MCF 10A (cell line): ENCODE measurements at regions of chr9 and their contacts with region 1.

Region 1: DNA sequence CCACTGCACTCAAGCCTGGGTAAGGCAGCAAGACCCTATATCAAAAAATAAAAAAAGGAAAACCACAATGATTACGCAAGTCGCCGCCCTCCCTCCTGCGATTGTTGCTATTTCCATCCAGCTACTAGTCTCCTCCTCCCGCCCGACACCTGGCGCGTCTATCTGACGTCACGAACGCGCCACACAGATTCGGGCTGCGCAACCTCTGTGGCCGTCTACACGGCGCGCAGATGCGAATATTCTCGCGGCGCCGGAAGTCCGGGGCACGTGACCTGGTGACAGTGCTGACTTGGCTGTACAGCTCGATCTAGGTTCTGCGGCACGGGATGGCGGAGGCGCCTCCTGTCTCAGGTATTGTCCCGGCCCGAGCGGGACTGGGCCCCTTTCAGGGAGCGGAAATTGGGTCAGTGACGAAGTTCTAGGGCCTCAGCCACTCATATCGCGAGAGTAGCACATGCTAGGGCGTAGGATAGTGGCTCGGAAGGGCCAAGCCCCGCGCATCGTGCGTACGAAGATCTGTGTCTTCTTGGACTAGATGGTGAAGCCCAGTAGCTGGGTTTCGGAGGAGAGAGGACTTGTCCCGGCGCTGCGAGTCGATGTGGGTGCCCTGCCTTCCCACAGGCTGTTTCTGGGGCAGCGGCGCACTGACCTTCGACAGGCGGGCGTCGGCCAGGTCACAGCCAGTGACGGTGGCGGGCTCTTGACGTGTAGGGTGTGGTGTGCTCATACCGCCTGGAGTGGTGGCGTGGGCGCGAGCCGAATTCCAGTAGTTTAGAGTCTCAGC is at the start of gene NFX1:
- DNase-seq: peak; percentile 98
- H3K4me3 Mint-ChIP-seq: peak within 1 kb of the TSS; percentile 100
- H3K27ac Mint-ChIP-seq: peak within 1 kb of the TSS; percentile 100
- H3K4me1 Mint-ChIP-seq: peaks cover 26% of the 10 kb centered on the region
- H3K27me3 Mint-ChIP-seq: no peaks in the 10 kb centered on the region
- CTCF ChIP-seq: no peak
- total RNA-seq, gene NFX1: 66.7 and 78.5 TPM in 2 replicates

Region 2: DNA sequence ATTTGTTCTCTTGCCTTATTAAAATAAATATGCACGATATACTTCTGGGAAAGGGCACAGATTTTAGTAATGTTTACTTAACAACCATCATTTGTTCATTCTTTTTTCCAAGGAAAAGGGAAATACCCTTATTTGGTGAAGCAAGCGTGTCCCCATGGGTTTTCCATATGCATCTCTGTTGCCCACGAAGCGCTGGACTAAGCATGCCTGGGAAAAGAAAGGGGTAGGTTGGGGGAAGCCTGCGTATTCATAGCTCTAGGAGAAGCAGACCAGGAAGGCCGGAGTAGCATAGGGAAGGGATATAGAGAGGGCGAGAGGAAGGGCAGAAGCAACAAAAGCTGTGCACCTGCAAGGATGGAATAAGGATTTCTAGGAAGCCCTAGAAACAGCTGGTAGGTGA is 967.8 kb before region 1 on chr9:
- CTCF ChIA-PET with region 1: no interaction called
- POLR2A ChIA-PET with region 1: no interaction called
- intact Hi-C with region 1: no loop called
- DNase-seq: no peak
- H3K4me3 Mint-ChIP-seq: no peak overlapping the region
- H3K27ac Mint-ChIP-seq: no peak overlapping the region
- H3K4me1 Mint-ChIP-seq: no peaks in the 10 kb centered on the region
- H3K27me3 Mint-ChIP-seq: peaks cover 40% of the 10 kb centered on the region
- CTCF ChIP-seq: no peak

Region 3: GRCh38 chr9:33076358-33077004 is 214.0 kb before region 1 on chr9 and contains the start of gene SMU1:
- CTCF ChIA-PET with region 1: interaction called, 3 read pairs
- POLR2A ChIA-PET with region 1: interaction called, 12 read pairs
- intact Hi-C with region 1: no loop called
- DNase-seq: peak; percentile 98
- H3K4me3 Mint-ChIP-seq: peak within 1 kb of the TSS; percentile 86
- H3K27ac Mint-ChIP-seq: peak within 1 kb of the TSS; percentile 99
- H3K4me1 Mint-ChIP-seq: peaks cover 14% of the 10 kb centered on the region
- H3K27me3 Mint-ChIP-seq: no peaks in the 10 kb centered on the region
- CTCF ChIP-seq: no peak
- total RNA-seq, gene SMU1: 17.2 and 19.3 TPM in 2 replicates

Region 4: GRCh38 chr9:33187519-33188218 is 102.8 kb before region 1 on chr9:
- CTCF ChIA-PET with region 1: no interaction called
- POLR2A ChIA-PET with region 1: no interaction called
- intact Hi-C with region 1: no loop called
- DNase-seq: no peak
- H3K4me3 Mint-ChIP-seq: no peak overlapping the region
- H3K27ac Mint-ChIP-seq: no peak overlapping the region
- H3K4me1 Mint-ChIP-seq: peaks cover 29% of the 10 kb centered on the region
- H3K27me3 Mint-ChIP-seq: no peaks in the 10 kb centered on the region
- CTCF ChIP-seq: no peak

Region 5: DNA sequence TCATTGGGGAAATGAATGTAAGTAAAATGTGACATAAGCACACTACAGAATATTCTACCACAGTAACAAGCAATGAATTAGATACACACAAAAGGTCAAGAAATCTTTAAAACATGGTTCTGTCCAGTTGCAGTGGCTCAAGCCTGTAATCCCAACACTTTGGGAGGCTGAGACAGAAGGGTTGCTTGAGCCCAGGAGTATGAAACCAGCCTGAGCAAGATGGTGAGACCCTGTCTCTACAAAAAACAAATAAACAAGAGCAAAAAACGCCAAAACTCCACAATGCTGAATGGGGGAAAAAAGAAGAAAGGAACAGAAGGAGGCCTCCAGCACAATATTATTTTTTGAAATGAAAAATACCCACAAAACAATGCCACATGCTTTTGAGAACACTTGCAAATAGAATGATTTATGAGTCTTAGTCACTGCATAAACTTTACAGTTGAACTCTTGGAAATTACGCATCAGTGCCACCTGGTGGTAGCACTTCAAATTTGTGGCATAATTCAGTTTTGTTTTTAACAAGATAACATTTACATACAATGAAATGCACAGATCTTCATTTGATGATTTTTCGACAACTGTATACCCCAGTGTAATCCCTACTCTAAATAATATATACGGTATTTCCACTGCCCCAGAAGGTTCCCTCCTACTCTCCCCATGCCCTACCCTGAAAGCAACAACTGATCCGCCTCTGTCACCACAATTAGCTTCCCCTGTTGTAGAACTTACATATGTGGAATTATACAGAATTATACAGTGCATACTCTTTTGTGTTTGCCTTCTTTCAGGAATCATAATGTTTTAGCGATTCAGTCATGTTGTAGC is 64.9 kb before region 1 on chr9:
- CTCF ChIA-PET with region 1: interaction called, 10 read pairs
- POLR2A ChIA-PET with region 1: interaction called, 63 read pairs
- intact Hi-C with region 1: loop called (anchors 1 kb)
- DNase-seq: peak; percentile 83
- H3K4me3 Mint-ChIP-seq: no peak overlapping the region
- H3K27ac Mint-ChIP-seq: no peak overlapping the region
- H3K4me1 Mint-ChIP-seq: peaks cover 33% of the 10 kb centered on the region
- H3K27me3 Mint-ChIP-seq: no peaks in the 10 kb centered on the region
- CTCF ChIP-seq: peak; percentile 52

Region 6: DNA sequence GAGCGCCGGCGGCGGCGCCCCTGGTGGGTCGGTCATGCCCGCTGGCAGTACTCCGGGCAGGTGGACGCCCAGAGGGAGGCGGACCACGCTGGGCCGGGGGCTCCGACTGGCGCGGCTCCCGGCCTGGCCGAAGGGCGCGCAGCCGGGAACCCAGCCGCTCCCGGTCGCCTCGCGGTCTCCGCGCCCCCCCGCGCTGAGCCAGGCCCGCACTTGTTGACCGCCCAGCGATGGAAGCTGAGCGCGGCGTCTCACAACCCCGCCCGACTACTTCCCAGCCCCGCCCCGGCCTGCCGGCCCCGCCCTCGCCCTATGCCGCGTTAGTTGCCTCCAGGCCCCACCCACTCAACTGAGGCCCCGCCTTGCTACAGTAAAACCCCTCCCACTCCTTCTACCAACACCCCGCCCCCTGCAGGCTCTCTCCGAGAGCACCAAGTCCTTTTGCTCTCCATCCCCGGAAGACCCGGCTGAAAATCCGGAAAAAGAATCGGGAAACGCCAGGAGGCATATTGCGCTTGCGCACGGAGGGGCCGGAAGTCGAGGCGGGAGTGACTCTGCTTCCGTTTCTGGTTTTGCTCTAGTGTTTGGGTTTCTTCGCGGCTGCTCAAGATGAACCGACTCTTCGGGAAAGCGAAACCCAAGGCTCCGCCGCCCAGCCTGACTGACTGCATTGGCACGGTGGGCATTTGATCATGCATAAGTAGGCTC is 25.8 kb before region 1 on chr9 and contains the starts of genes BAG1 and CHMP5:
- CTCF ChIA-PET with region 1: interaction called, 5 read pairs
- POLR2A ChIA-PET with region 1: interaction called, 38 read pairs
- intact Hi-C with region 1: loop called (anchors 2 kb)
- DNase-seq: peak; percentile 99
- H3K4me3 Mint-ChIP-seq: peak within 1 kb of the TSS; percentile 99
- H3K27ac Mint-ChIP-seq: peak within 1 kb of the TSS; percentile 95
- H3K4me1 Mint-ChIP-seq: peaks cover 33% of the 10 kb centered on the region
- H3K27me3 Mint-ChIP-seq: no peaks in the 10 kb centered on the region
- CTCF ChIP-seq: no peak
- total RNA-seq, gene BAG1: 75.7 and 91.8 TPM in 2 replicates
- total RNA-seq, gene CHMP5: 67.6 and 85.1 TPM in 2 replicates

Region 7: DNA sequence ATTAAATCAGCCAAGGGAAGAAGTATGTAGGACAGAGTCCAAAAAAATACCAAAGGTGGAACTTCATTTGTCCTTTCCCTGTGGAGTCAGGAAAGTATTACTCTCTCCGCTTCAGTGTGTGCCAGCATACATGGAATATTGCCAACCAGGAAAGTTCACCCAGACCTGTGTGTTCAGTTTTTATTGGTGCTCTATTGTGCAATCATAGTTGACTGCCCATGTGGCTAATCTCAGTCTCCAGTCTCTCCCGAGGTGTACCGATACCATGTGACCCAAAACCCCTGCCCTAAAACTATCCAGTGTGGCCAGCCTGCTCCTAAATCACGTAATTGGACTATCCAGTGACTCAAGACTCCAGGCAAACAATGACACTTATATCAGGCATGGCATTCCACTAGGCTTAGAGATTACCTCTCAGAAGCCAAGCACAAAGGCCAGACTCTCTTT is 38.7 kb after region 1 on chr9:
- CTCF ChIA-PET with region 1: no interaction called
- POLR2A ChIA-PET with region 1: interaction called, 9 read pairs
- intact Hi-C with region 1: loop called (anchors 1 kb)
- DNase-seq: peak; percentile 98
- H3K4me3 Mint-ChIP-seq: peak overlapping the region; percentile 35
- H3K27ac Mint-ChIP-seq: peak overlapping the region; percentile 86
- H3K4me1 Mint-ChIP-seq: peaks cover 26% of the 10 kb centered on the region
- H3K27me3 Mint-ChIP-seq: no peaks in the 10 kb centered on the region
- CTCF ChIP-seq: no peak

Region 8: GRCh38 chr9:33452828-33453271 is 162.4 kb after region 1 on chr9:
- CTCF ChIA-PET with region 1: no interaction called
- POLR2A ChIA-PET with region 1: interaction called, 4 read pairs
- intact Hi-C with region 1: loop called (anchors 2 kb)
- DNase-seq: peak; percentile 96
- H3K4me3 Mint-ChIP-seq: no peak overlapping the region
- H3K27ac Mint-ChIP-seq: no peak overlapping the region
- H3K4me1 Mint-ChIP-seq: peaks cover 13% of the 10 kb centered on the region
- H3K27me3 Mint-ChIP-seq: no peaks in the 10 kb centered on the region
- CTCF ChIP-seq: peak; percentile 66

Region 9: GRCh38 chr9:33843312-33843961 is 553.0 kb after region 1 on chr9:
- CTCF ChIA-PET with region 1: no interaction called
- POLR2A ChIA-PET with region 1: no interaction called
- intact Hi-C with region 1: no loop called
- DNase-seq: no peak
- H3K4me3 Mint-ChIP-seq: no peak overlapping the region
- H3K27ac Mint-ChIP-seq: no peak overlapping the region
- H3K4me1 Mint-ChIP-seq: peaks cover 6% of the 10 kb centered on the region
- H3K27me3 Mint-ChIP-seq: no peaks in the 10 kb centered on the region
- CTCF ChIP-seq: no peak